CD4-positive, alpha-beta T cell (primary cell): ENCODE measurements at regions of chr19 and their contacts with region 1.

Region 1: GRCh38 chr19:58380722-58381466 is at the start of gene ZNF837:
- DNase-seq: peak; percentile 93 to 100 (median 97)
- ATAC-seq: peak; percentile 83
- H3K4me3 ChIP-seq: peak within 1 kb of the TSS; percentile 82
- H3K4me3 Mint-ChIP-seq: peak within 1 kb of the TSS; percentile 92
- H3K27ac ChIP-seq: peak within 1 kb of the TSS; percentile 81 to 92
- H3K27ac Mint-ChIP-seq: peak within 1 kb of the TSS; percentile 86
- H3K4me1 ChIP-seq: peaks cover 43% of the 10 kb centered on the region
- H3K4me1 Mint-ChIP-seq: peaks cover 33% of the 10 kb centered on the region
- H3K27me3 ChIP-seq: no peaks in the 10 kb centered on the region
- H3K27me3 Mint-ChIP-seq: no peaks in the 10 kb centered on the region
- CTCF ChIP-seq: no peak
- total RNA-seq, gene ZNF837: 0.71 to 1.0 TPM

Region 2: DNA sequence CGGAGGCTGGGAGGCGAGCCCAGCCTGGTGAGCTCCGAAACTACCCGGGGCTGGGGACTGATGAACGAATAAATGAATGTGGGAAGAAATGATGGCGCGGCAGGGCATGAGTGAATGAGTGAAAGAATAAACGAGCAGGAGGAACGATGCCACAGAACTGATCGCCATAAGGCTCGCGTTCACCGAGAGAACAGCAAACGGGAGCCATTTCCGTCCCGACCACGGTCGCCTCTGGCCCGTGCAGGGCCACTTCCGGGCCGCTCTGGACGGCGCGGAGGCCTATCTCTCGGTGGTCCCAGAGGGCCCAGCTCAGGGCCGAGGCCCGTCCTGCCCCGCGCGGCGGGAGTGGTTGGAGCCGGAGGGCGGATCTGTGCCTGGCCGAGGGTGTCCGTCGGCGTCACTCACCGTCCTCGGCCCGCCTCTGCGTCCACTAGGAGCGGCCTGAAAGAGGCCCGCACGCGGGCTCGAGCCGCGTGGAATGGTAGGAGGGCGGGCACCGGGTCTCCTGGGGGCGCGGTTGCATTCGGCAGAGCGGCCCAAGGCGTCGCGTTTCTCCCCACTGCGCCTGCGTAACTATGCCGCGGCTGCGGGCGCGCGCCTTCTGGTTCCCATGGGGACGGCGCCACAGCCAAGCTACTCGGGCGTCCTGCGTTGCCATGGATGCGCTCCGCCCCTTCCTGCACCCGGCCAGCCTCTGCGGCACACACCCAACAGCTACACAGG is 18.5 kb before region 1 on chr19 and contains the start of gene ZNF497:
- CTCF ChIA-PET with region 1: no interaction called
- POLR2A ChIA-PET with region 1: interaction called, 21 read pairs
- intact Hi-C with region 1: loop called (anchors 1 kb)
- DNase-seq: peak; percentile 92 to 99 (median 97)
- ATAC-seq: peak; percentile 90
- H3K4me3 ChIP-seq: peak within 1 kb of the TSS; percentile 84
- H3K4me3 Mint-ChIP-seq: peak within 1 kb of the TSS; percentile 94
- H3K27ac ChIP-seq: peak within 1 kb of the TSS; percentile 58 to 69
- H3K27ac Mint-ChIP-seq: peak within 1 kb of the TSS; percentile 84
- H3K4me1 ChIP-seq: peaks cover 22% of the 10 kb centered on the region
- H3K4me1 Mint-ChIP-seq: peaks cover 12% of the 10 kb centered on the region
- H3K27me3 ChIP-seq: no peaks in the 10 kb centered on the region
- H3K27me3 Mint-ChIP-seq: no peaks in the 10 kb centered on the region
- CTCF ChIP-seq: no peak
- total RNA-seq, gene ZNF497: 0.28 to 0.55 TPM

Region 3: DNA sequence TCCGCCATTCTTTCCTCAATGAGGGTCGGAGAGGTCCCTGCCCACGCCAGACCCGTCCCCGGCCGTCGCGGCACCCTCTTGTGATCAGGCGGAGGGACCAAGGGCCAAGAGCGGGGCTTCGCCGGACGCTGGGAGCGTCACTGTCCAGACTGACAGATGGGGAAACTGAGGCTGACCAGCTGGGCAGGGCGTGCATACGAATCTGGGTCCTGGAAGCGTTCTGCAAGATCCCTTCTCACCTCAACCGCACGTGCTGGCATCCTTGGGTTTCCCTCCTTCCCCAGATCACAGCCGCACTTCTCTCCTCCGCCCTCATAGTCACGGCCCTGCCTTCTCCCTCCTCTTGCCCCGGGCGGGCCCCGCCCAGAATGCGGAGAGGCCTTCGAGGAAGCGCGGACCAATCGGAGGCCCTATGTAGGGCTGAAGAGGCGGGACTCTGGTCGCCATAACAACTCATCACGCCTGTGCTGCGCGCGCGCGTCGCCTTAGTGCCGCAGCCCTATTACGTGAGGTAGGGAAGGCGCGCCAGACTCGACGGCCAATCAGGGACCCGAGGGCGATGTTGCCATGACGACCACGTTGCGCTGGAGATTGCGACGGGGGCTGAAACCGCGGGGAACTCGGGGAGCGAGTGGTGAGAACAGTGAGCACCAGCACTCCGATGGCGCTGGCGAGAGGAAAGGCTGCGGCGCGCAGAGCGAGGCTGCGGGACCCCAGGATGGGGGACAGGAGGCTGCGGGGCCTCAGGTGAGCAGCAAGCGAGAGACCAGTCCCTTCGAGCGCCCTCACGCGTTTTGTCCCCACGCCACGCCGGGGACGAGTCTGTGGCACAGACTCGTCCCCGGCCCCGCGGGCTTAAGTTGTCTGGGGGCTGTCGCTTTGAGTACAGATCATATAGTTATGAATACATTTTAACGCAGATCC is 20.3 kb after region 1 on chr19:
- CTCF ChIA-PET with region 1: no interaction called
- POLR2A ChIA-PET with region 1: no interaction called
- intact Hi-C with region 1: loop called (anchors 1 kb)
- DNase-seq: peak; percentile 98 to 100 (median 99)
- ATAC-seq: peak; percentile 95
- H3K4me3 ChIP-seq: peak overlapping the region; percentile 75
- H3K4me3 Mint-ChIP-seq: peak overlapping the region; percentile 88
- H3K27ac ChIP-seq: peak overlapping the region; percentile 59 to 94
- H3K27ac Mint-ChIP-seq: peak overlapping the region; percentile 86
- H3K4me1 ChIP-seq: peaks cover 20% of the 10 kb centered on the region
- H3K4me1 Mint-ChIP-seq: peaks cover 9% of the 10 kb centered on the region
- H3K27me3 ChIP-seq: peaks cover 11 to 15% of the 10 kb centered on the region in 2 experiments
- H3K27me3 Mint-ChIP-seq: peaks cover 25% of the 10 kb centered on the region
- CTCF ChIP-seq: no peak

Region 4: DNA sequence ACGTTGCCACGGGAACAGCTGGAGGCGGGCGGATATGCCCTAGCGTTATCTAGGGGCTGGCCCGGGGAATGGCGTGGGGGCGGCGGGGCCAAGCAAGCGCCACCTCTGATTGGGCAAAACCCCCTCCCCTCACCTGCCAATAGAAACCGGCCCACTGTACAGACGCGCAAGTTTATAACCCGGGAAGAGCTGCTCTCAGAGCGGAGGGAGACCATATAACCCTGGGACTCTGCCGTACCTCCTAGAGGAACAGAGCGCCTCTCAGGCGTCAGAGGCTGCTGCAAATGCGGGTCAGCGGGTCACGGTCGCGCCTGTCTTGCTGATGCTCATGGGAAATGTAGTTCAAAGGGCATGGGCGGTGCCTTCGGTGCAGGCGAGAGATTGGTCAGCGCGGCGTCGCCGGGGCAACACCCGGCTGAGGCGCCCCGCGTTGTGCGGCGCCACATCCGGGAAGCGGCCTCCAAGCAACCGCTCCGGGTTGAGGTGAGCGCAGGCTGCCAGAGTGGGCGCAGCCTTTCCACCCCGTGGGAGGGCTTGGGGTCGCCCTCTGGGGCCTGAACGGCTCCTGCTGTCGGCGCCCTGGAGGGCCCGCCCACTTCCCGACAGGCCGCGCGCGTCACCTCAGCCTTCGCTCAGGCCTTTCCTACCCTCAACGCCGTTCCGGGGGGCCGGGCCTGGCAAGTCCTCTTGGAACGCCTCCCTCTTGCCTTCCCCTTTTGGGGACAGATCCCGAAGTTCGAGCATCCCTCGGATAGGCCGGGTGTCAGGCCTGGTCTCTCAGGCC is 95.0 kb after region 1 on chr19 and contains the start of gene ZNF446:
- CTCF ChIA-PET with region 1: no interaction called
- POLR2A ChIA-PET with region 1: no interaction called
- intact Hi-C with region 1: loop called in 1 of 2 experiments (anchors 2 kb)
- DNase-seq: peak; percentile 90 to 99 (median 94)
- ATAC-seq: peak; percentile 82
- H3K4me3 ChIP-seq: peak within 1 kb of the TSS; percentile 87
- H3K4me3 Mint-ChIP-seq: peak within 1 kb of the TSS; percentile 90
- H3K27ac ChIP-seq: peak within 1 kb of the TSS; percentile 76 to 95
- H3K27ac Mint-ChIP-seq: peak within 1 kb of the TSS; percentile 95
- H3K4me1 ChIP-seq: peaks cover 22% of the 10 kb centered on the region
- H3K4me1 Mint-ChIP-seq: peaks cover 23% of the 10 kb centered on the region
- H3K27me3 ChIP-seq: no peaks in the 10 kb centered on the region
- H3K27me3 Mint-ChIP-seq: no peaks in the 10 kb centered on the region
- CTCF ChIP-seq: no peak
- total RNA-seq, gene ZNF446: 13.6 to 14.6 TPM